ENCODE measurements at regions of chr7 and their contacts with region 1.

Region 1: GRCh38 chr7:119838444-119838843 is 434.5 kb upstream of the KCND2 start:
- DNase-seq: no peak
- H3K4me3 ChIP-seq: no peak overlapping the region
- H3K27ac ChIP-seq: no peak overlapping the region
- H3K4me1 ChIP-seq: no peaks in the 10 kb centered on the region
- H3K27me3 ChIP-seq: no peaks in the 10 kb centered on the region
- CTCF ChIP-seq: no peak
- EP300 ChIP-seq: no peak
- POLR2A ChIP-seq: no peak

Region 2: DNA sequence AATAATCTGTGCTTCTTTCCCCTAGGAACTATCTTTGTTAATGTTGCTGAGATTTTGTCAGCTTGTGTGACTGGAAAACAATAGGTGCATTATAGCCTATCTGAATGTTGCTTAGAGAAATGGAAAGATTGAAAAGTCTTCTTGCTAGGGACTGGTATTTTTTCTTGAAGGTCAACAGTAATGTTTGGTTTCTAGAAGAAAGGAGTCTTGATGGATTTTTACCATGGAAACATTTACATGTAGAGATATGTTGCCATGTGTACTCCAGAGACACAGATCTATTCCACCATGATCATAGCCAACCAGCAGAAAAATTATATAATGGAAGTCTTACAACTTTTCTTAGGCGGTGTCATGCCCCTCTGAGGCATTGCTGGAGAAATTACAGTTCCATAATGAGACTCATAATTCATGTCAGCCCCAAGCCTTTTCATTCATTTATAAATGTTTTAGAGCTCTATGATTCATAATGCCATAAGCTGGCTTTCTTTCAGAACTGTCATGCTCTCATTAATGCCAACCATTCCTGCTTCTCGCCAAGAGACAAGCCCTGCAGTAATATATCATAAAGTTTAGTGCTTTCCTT is 1859.4 kb after region 1 on chr7:
- intact Hi-C with region 1: loop called (anchors 10 kb)
- DNase-seq: no peak
- H3K4me3 ChIP-seq: no peak overlapping the region
- H3K27ac ChIP-seq: no peak overlapping the region
- H3K4me1 ChIP-seq: no peaks in the 10 kb centered on the region
- H3K27me3 ChIP-seq: no peaks in the 10 kb centered on the region
- CTCF ChIP-seq: no peak
- EP300 ChIP-seq: no peak
- POLR2A ChIP-seq: no peak